ENCODE measurements at regions of chr6 and their contacts with region 1.

Region 1: DNA sequence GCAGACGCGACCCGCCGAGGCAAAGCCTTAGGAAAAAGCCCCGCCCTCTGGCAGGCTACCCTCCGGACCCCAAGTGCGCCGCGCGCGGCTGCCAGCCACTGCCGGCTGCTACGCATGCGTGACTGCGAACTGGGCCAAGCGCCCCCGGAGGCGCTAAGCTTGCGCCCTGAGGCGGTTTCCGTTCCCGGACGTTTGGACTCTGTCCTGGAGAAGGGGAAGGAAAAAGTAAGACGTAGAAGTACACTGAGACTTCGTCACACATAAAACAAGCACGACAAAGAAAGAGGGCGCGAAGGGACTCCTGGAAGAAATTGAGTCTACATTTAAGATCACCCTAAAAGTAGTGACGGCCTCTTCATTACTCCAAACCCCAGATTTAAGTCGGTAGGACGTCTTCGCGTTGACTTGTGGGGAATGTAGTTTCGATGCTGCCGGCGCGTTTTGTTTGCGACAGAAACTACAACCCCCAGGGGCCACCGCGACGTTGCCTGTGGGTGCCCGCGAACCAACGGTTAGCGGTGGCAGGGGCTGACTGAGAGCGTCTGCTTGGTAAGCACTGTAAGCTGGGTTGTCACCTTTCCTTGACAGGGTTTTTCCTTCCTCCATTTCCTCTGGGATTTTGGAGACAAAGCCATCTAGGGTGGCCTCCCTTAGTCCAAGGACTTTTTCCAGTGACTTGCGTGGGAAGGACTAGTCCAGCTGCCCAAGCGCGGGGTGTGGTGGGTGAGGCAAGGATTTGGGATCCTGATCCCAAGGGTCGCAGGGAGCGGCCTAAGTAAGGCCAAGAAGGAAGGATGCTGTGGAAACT is at the start of gene CEP57L1:
- DNase-seq: peak; percentile 96
- H3K4me3 ChIP-seq: peak within 1 kb of the TSS; percentile 90 to 94 (median 91)
- H3K27ac ChIP-seq: peak within 1 kb of the TSS; percentile 94
- H3K4me1 ChIP-seq: peaks cover 12% of the 10 kb centered on the region
- H3K27me3 ChIP-seq: no peaks in the 10 kb centered on the region
- CTCF ChIP-seq: peak in 1 of 2 donors; percentile 9
- total RNA-seq, gene CEP57L1: 17.7 to 23.6 TPM

Region 2: GRCh38 chr6:109009236-109009961 is 85.8 kb before region 1 on chr6:
- CTCF ChIA-PET with region 1: no interaction called
- dilution Hi-C with region 1: no loop called
- in situ Hi-C with region 1: no loop called
- intact Hi-C with region 1: no loop called
- DNase-seq: peak; percentile 89
- H3K4me3 ChIP-seq: peak overlapping the region; percentile 80 to 100 (median 97)
- H3K27ac ChIP-seq: peak overlapping the region; percentile 98
- H3K4me1 ChIP-seq: peaks cover 16% of the 10 kb centered on the region
- H3K27me3 ChIP-seq: no peaks in the 10 kb centered on the region
- CTCF ChIP-seq: no peak

Region 3: DNA sequence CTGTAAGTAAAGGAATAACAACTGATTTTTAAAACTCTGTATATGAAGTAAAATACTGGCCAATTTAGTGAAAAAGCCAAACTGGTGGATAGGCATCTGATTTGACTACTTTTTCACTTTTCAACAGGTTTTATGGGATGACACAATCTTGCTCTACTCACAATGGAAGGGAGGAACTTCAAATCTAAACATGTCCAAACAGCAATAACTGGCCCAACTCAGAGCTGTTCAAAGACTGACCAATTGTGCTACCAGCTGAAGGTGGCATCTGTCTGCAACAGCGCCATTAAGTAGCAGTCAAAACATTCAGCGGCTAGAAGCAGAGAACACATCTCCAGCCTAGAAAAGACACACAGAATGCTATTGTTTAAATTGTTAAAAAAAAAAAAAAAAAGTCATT is 45.2 kb before region 1 on chr6:
- CTCF ChIA-PET with region 1: interaction called, 10 read pairs
- dilution Hi-C with region 1: no loop called
- in situ Hi-C with region 1: no loop called
- intact Hi-C with region 1: no loop called
- DNase-seq: peak; percentile 91
- H3K4me3 ChIP-seq: no peak overlapping the region
- H3K27ac ChIP-seq: no peak overlapping the region
- H3K4me1 ChIP-seq: peaks cover 12% of the 10 kb centered on the region
- H3K27me3 ChIP-seq: no peaks in the 10 kb centered on the region
- CTCF ChIP-seq: no peak

Region 4: GRCh38 chr6:109082188-109082577 is 13.0 kb before region 1 on chr6:
- CTCF ChIA-PET with region 1: no interaction called
- dilution Hi-C with region 1: no loop called
- in situ Hi-C with region 1: no loop called
- intact Hi-C with region 1: no loop called
- DNase-seq: peak; percentile 26
- H3K4me3 ChIP-seq: no peak overlapping the region
- H3K27ac ChIP-seq: no peak overlapping the region
- H3K4me1 ChIP-seq: no peaks in the 10 kb centered on the region
- H3K27me3 ChIP-seq: no peaks in the 10 kb centered on the region
- CTCF ChIP-seq: no peak

Region 5: GRCh38 chr6:109139109-109139508 is 43.9 kb after region 1 on chr6:
- CTCF ChIA-PET with region 1: no interaction called
- dilution Hi-C with region 1: no loop called
- in situ Hi-C with region 1: no loop called
- intact Hi-C with region 1: loop called (anchors 1 kb)
- DNase-seq: peak; percentile 91
- H3K4me3 ChIP-seq: peak overlapping the region in 1 of 3 experiments; percentile 1
- H3K27ac ChIP-seq: peak overlapping the region; percentile 66
- H3K4me1 ChIP-seq: peaks cover 10% of the 10 kb centered on the region
- H3K27me3 ChIP-seq: no peaks in the 10 kb centered on the region
- CTCF ChIP-seq: no peak

Region 6: GRCh38 chr6:109187399-109188114 is 92.3 kb after region 1 on chr6:
- CTCF ChIA-PET with region 1: no interaction called
- dilution Hi-C with region 1: no loop called
- in situ Hi-C with region 1: no loop called
- intact Hi-C with region 1: loop called (anchors 2 kb)
- DNase-seq: peak; percentile 16
- H3K4me3 ChIP-seq: no peak overlapping the region
- H3K27ac ChIP-seq: no peak overlapping the region
- H3K4me1 ChIP-seq: no peaks in the 10 kb centered on the region
- H3K27me3 ChIP-seq: peaks cover 2% of the 10 kb centered on the region
- CTCF ChIP-seq: peak; percentile 88 to 98

Region 7: GRCh38 chr6:109212683-109213082 is 117.5 kb after region 1 on chr6:
- CTCF ChIA-PET with region 1: no interaction called
- dilution Hi-C with region 1: no loop called
- in situ Hi-C with region 1: no loop called
- intact Hi-C with region 1: no loop called
- DNase-seq: no peak
- H3K4me3 ChIP-seq: no peak overlapping the region
- H3K27ac ChIP-seq: no peak overlapping the region
- H3K4me1 ChIP-seq: no peaks in the 10 kb centered on the region
- H3K27me3 ChIP-seq: peaks cover 2% of the 10 kb centered on the region
- CTCF ChIP-seq: no peak

Region 8: GRCh38 chr6:109382576-109383437 is 287.6 kb after region 1 on chr6:
- CTCF ChIA-PET with region 1: interaction called, 7 read pairs
- dilution Hi-C with region 1: no loop called
- in situ Hi-C with region 1: no loop called
- intact Hi-C with region 1: loop called (anchors 2 kb)
- DNase-seq: peak; percentile 93
- H3K4me3 ChIP-seq: peak overlapping the region; percentile 70 to 100 (median 95)
- H3K27ac ChIP-seq: peak overlapping the region; percentile 98
- H3K4me1 ChIP-seq: peaks cover 29% of the 10 kb centered on the region
- H3K27me3 ChIP-seq: no peaks in the 10 kb centered on the region
- CTCF ChIP-seq: peak; percentile 42 to 61